GM13976 (cell line): ENCODE measurements at regions of chr7 and their contacts with region 1.

Region 1: GRCh38 chr7:140810830-140811556 is 113.7 kb downstream of the BRAF start:
- DNase-seq: peak; percentile 48
- CTCF ChIP-seq: peak; percentile 64

Region 2: DNA sequence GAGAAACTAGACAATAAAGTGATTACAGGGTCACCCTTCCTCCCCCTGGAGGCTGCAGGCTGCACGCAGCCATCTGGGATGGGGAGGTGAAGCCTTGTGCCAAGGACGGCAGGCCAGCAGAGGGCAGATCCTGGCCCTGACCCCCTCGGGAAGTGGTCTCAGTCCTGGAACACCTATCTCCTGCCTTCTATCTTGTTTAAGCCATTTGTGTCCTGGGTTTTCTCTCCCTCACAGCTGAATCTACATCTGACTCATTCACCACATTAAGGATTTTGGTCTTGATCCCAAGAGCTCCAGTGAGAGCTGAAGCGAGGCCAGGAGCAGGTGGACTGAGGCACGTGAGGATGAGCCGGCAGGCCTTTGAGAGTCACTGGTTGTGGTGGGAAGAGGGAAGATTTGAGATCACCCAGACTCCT is 731.9 kb before region 1 on chr7:
- in situ Hi-C with region 1: no loop called
- DNase-seq: no peak
- CTCF ChIP-seq: no peak

Region 3: DNA sequence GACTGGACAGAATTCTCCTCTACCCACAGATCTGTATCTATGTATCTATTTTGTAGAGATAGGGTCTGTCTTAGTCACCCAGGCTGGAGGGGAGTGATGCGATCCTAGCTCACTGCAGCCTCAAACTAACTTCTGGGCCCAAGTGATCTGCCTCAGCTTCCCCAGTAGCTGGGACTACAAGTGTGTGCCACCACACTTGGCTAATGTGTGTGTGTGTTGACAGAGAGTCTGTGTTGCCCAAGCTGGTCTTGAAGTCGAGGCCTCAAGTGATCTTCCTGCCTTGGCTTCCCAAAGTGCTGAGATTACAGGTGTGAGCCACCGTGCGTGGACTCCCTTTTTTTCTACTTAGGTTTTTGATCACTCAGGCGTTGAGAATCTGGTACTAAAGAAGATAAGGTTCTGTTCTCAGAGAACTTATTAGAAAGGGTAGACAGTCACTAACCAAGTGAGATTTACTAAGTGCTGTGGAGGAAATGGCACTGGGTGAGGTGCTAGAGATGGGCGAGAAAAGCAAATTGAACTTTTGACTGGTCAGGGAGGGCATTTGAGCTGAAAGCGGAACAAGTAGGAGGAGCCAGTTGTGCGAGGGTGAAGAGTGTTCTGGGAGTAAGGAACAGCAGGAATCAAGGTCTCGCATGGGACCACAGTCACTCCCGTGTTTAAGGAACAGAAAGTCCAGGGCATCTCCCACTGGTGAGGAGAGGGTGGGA is 96.5 kb before region 1 on chr7:
- in situ Hi-C with region 1: no loop called
- DNase-seq: no peak
- CTCF ChIP-seq: no peak

Region 4: GRCh38 chr7:140990193-140990962 is 179.4 kb after region 1 on chr7:
- in situ Hi-C with region 1: loop called (anchors 10 kb)
- DNase-seq: no peak
- CTCF ChIP-seq: no peak

Region 5: DNA sequence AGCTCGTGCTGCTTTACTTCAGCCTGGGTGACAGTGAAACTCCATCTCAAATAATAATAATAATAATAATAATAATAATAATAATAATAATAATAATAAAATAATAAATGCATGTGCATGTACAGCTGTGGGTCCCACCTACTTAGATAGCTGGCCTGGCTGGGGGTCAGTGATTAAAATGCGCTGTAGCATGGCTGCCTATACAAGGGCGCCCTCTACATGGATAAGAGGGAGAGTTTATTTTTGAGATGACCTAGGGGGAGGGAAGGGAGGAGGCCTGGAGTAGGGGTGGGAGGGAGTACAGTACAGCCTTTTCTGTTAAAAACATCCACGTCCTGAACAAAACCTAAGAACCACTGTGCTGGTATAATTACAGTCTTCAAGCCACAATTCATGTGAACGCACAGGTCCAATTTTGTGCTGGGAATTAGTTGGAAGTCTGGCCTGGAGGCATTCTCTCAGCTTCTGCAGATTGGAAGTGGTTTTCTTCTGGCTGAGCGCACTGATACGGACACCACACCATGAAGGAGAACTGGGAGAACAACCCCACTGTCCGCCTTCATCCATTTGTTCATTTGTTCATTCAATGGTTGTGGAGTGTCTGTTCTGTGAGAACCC is 409.4 kb after region 1 on chr7:
- in situ Hi-C with region 1: loop called (anchors 25 kb)
- DNase-seq: no peak
- CTCF ChIP-seq: peak; percentile 30

Region 6: GRCh38 chr7:141533149-141533949 is 722.4 kb after region 1 on chr7:
- in situ Hi-C with region 1: loop called (anchors 25 kb)
- DNase-seq: peak; percentile 62
- CTCF ChIP-seq: peak; percentile 94